ENCODE measurements at regions of chr1 and their contacts with region 1.

Region 1: GRCh38 chr1:23098463-23099170 is 70.0 kb downstream of the LUZP1 start:
- DNase-seq: peak; percentile 76
- H3K4me3 Mint-ChIP-seq: no peak overlapping the region
- H3K27ac Mint-ChIP-seq: no peak overlapping the region
- H3K4me1 Mint-ChIP-seq: peaks cover 43% of the 10 kb centered on the region
- H3K27me3 Mint-ChIP-seq: no peaks in the 10 kb centered on the region

Region 2: GRCh38 chr1:22592919-22593790 is 505.5 kb before region 1 on chr1:
- CTCF ChIA-PET with region 1: no interaction called
- intact Hi-C with region 1: no loop called
- DNase-seq: no peak
- H3K4me3 Mint-ChIP-seq: no peak overlapping the region
- H3K27ac Mint-ChIP-seq: no peak overlapping the region
- H3K4me1 Mint-ChIP-seq: no peaks in the 10 kb centered on the region
- H3K27me3 Mint-ChIP-seq: peaks cover 11% of the 10 kb centered on the region

Region 3: DNA sequence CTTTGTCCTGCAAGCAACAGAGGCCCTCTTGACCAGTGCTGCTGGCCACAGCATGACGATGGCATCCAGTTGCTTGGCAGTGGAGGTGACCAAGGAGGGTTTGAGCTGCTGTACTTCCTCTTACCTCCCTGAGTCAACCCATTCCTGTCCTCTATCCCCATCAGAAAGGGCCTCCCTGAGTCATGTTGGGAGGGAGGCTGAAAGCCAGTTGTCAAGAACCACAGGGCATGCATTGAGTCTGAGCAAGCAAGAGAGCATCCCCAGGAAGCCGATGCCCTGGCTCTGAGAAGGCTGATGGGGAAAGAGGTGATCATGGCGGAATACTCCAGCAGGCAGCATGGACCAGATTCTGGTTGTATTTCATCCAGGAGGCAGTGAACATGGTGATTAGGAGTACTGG is 195.5 kb before region 1 on chr1:
- CTCF ChIA-PET with region 1: no interaction called
- intact Hi-C with region 1: no loop called
- DNase-seq: no peak
- H3K4me3 Mint-ChIP-seq: no peak overlapping the region
- H3K27ac Mint-ChIP-seq: no peak overlapping the region
- H3K4me1 Mint-ChIP-seq: no peaks in the 10 kb centered on the region
- H3K27me3 Mint-ChIP-seq: peaks cover 2% of the 10 kb centered on the region

Region 4: DNA sequence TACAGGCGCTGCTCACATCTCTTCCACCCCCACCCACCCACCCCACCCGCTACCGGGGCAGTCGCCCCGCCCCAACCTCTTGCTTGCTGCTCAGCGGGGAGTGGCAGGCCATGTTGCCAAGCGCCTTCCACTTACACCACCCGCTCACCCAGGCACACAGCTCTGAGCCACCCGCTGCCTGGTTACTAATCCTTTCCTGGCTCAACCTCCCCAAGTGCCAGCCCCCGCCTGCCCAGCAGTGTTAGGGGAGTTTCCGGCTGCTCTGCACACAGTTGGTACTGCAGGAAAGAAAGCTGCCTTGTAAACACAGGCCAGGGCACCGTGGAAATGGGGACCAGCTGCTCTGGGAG is 182.2 kb before region 1 on chr1:
- CTCF ChIA-PET with region 1: no interaction called
- intact Hi-C with region 1: no loop called
- DNase-seq: no peak
- H3K4me3 Mint-ChIP-seq: no peak overlapping the region
- H3K27ac Mint-ChIP-seq: no peak overlapping the region
- H3K4me1 Mint-ChIP-seq: no peaks in the 10 kb centered on the region
- H3K27me3 Mint-ChIP-seq: peaks cover 3% of the 10 kb centered on the region

Region 5: DNA sequence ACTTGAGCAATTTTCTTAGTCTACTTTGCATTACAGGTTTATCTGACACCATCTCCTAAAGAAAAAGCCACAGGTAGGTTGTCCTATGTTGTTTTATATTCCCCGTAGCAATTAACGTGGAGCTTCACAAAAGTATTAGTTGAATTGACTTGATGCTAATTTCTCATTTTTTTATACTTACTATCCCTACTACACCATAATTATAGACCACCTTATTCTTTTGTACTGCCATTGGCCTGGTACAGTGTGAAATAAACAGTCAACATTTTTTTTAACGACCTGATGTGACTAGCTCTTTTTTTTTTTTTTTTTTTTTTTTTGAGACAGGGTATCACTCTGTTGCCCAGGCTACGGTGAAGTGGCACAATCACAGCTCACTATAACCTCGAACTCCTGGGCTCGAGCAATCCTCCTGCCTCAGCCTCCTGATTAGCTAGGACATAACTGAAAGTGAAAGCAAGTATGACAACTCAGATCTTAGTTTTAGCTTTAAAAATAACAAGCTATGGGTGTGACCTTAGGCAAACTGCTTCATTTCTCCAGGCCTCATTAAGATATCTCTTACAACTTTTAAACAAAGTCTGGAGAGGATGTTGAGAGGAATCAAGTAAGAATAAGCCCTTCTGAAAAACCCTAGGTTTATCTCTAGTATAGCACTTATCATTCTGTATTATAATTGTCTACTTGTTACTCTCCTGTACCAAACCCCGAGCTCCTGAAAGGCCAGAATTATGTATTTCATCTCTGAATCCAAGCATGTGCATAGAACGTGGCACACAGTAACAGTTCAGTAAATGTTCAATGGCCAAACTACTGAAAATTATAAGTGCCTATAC is 20.6 kb after region 1 on chr1:
- CTCF ChIA-PET with region 1: interaction called, 36 read pairs
- intact Hi-C with region 1: loop called (anchors 1 kb)
- DNase-seq: peak; percentile 64
- H3K4me3 Mint-ChIP-seq: peak overlapping the region; percentile 4
- H3K27ac Mint-ChIP-seq: peak overlapping the region; percentile 21
- H3K4me1 Mint-ChIP-seq: peaks cover 52% of the 10 kb centered on the region
- H3K27me3 Mint-ChIP-seq: no peaks in the 10 kb centered on the region

Region 6: DNA sequence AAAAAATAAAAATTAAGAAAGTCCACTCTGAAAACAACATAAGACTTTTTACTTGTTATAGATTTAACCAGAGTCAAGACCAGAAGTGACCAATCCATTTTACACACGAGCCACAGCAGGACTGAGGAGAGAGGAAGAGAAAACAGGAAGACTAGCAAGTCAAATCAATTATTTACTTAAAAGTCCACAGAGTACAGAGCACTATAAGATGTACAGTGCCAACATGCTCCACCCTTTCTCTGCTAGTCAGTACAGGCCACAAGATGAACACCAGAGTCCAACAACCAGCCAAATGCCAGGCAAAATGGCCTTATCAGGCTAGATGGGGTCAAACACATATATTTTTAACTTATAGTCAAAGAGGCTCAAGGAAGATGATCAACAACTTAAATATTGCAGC is 50.5 kb after region 1 on chr1:
- CTCF ChIA-PET with region 1: interaction called, 3 read pairs
- intact Hi-C with region 1: loop called (anchors 5 kb)
- DNase-seq: no peak
- H3K4me3 Mint-ChIP-seq: no peak overlapping the region
- H3K27ac Mint-ChIP-seq: no peak overlapping the region
- H3K4me1 Mint-ChIP-seq: peaks cover 24% of the 10 kb centered on the region
- H3K27me3 Mint-ChIP-seq: no peaks in the 10 kb centered on the region

Region 7: GRCh38 chr1:23177438-23178380 is 79.1 kb after region 1 on chr1:
- CTCF ChIA-PET with region 1: interaction called, 404 read pairs
- intact Hi-C with region 1: no loop called
- DNase-seq: peak; percentile 68
- H3K4me3 Mint-ChIP-seq: peak overlapping the region; percentile 67
- H3K27ac Mint-ChIP-seq: no peak overlapping the region
- H3K4me1 Mint-ChIP-seq: peaks cover 15% of the 10 kb centered on the region
- H3K27me3 Mint-ChIP-seq: peaks cover 13% of the 10 kb centered on the region

Measured in activated naive CD4-positive, alpha-beta T cell treated with anti-CD3 and anti-CD28 coated beads for 36 hours (primary cell).